ENCODE measurements at regions of chr5 and their contacts with region 1.

Region 1: GRCh38 chr5:73591102-73591695 is 25.7 kb downstream of the UTP15 start:
- DNase-seq: peak in 6 of 9 experiments; percentile 16 to 81 (median 46)
- ATAC-seq: peak; percentile 62
- H3K4me3 ChIP-seq: no peak overlapping the region
- H3K4me3 Mint-ChIP-seq: no peak overlapping the region
- H3K27ac ChIP-seq: no peak overlapping the region
- H3K27ac Mint-ChIP-seq: no peak overlapping the region
- H3K4me1 ChIP-seq: no peaks in the 10 kb centered on the region
- H3K4me1 Mint-ChIP-seq: no peaks in the 10 kb centered on the region
- H3K27me3 ChIP-seq: no peaks in the 10 kb centered on the region
- H3K27me3 Mint-ChIP-seq: no peaks in the 10 kb centered on the region
- CTCF ChIP-seq: peak; percentile 84

Region 2: GRCh38 chr5:73215891-73216610 is 375.1 kb before region 1 on chr5:
- CTCF ChIA-PET with region 1: no interaction called
- POLR2A ChIA-PET with region 1: no interaction called
- intact Hi-C with region 1: no loop called
- DNase-seq: peak; percentile 36 to 77 (median 56)
- ATAC-seq: peak; percentile 95
- H3K4me3 ChIP-seq: peak overlapping the region; percentile 13 to 39
- H3K4me3 Mint-ChIP-seq: peak overlapping the region; percentile 69
- H3K27ac ChIP-seq: no peak overlapping the region
- H3K27ac Mint-ChIP-seq: no peak overlapping the region
- H3K4me1 ChIP-seq: peaks cover 9% of the 10 kb centered on the region
- H3K4me1 Mint-ChIP-seq: peaks cover 11% of the 10 kb centered on the region
- H3K27me3 ChIP-seq: peaks cover 15 to 27% of the 10 kb centered on the region in 2 experiments
- H3K27me3 Mint-ChIP-seq: peaks cover 76% of the 10 kb centered on the region
- CTCF ChIP-seq: peak; percentile 65

Region 3: DNA sequence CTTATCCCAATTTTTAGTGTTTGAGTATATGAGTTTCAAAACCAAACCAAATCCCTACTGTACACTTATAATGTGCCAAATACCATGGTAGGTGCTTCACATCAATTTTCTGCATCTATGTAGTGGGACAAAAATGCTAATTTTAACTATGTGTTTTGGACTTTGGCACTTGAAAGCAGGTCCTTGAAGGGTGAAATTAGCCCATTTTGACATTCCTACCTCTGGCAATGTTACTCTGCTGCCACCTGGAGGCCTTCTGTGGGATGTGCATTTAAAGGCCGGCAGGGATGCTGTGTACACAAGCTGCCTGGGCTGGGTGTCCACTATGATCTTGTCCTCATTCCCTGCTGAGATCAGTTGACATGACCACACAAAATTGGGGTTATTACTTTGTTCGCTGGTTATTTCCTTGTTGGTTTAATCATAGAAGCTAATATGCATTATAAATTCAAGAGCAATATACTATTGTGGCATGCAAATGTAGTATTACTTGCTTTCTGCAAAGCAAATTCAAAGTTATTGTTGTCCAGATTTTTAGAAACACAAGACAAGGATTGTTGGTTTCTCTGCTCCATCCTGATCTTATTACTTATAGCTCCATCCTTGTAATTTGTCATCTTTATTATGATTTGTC is 201.6 kb after region 1 on chr5:
- CTCF ChIA-PET with region 1: interaction called, 119 read pairs
- POLR2A ChIA-PET with region 1: interaction called, 3 read pairs
- intact Hi-C with region 1: loop called in 1 of 2 experiments (anchors 1 kb)
- DNase-seq: peak; percentile 30 to 75 (median 58)
- ATAC-seq: no peak
- H3K4me3 ChIP-seq: no peak overlapping the region
- H3K4me3 Mint-ChIP-seq: no peak overlapping the region
- H3K27ac ChIP-seq: no peak overlapping the region
- H3K27ac Mint-ChIP-seq: no peak overlapping the region
- H3K4me1 ChIP-seq: no peaks in the 10 kb centered on the region
- H3K4me1 Mint-ChIP-seq: no peaks in the 10 kb centered on the region
- H3K27me3 ChIP-seq: no peaks in the 10 kb centered on the region
- H3K27me3 Mint-ChIP-seq: peaks cover 18% of the 10 kb centered on the region
- CTCF ChIP-seq: peak; percentile 80

Measured in CD8-positive, alpha-beta T cell (primary cell).